ENCODE measurements at regions of chr4 and their contacts with region 1.

Region 1: DNA sequence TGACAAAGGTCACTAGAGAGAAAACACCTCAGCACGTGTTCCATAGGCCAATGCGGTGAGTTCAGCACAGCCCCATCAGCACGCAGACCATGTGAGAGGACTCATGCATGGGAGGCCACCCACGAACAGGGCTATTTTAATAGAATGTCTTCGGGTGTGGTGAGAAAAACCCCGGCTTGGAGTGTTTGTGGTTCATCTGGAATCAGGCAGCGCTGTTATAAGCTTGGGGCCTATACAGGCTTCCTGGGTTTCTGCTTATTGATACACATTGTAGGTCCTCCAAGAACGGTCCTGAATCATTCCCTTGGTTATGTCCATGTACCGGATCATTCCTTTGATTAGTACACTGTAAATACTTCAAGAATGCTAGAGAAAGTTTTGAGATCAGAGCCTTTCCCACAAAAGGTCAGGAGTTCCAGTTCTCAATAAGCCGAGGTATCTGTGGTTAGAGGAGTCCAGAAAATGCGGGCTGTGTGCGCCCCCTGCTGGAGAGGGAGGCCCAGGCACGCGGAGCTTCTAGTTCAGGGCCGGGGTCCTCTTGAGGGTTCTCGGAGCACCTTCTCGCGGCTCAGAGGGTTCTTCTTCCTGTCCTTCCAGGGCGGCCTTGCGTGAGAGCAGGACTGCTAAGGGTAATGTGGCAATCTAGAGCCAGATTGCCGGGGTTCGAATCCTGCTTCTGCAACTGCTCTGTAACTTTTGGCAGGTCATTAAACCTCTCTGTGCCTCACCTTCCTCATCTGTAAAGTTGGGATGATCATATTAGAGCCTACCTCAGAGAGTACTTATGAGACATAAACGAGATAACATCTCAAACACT is 51.8 kb downstream of the TLR10 start:
- DNase-seq: peak; percentile 62 to 96
- H3K4me3 ChIP-seq: no peak overlapping the region
- H3K27ac ChIP-seq: no peak overlapping the region
- H3K4me1 ChIP-seq: peaks cover 0 to 3% (median 1%) of the 10 kb centered on the region in 4 experiments; a peak in 2 of 7 replicates
- H3K27me3 ChIP-seq: no peaks in the 10 kb centered on the region
- CTCF ChIP-seq: peak; percentile 88 to 94 (median 91)
- EP300 ChIP-seq: no peak
- POLR2A ChIP-seq: no peak
- RAD21 ChIP-seq: peak; percentile 95 to 97

Region 2: DNA sequence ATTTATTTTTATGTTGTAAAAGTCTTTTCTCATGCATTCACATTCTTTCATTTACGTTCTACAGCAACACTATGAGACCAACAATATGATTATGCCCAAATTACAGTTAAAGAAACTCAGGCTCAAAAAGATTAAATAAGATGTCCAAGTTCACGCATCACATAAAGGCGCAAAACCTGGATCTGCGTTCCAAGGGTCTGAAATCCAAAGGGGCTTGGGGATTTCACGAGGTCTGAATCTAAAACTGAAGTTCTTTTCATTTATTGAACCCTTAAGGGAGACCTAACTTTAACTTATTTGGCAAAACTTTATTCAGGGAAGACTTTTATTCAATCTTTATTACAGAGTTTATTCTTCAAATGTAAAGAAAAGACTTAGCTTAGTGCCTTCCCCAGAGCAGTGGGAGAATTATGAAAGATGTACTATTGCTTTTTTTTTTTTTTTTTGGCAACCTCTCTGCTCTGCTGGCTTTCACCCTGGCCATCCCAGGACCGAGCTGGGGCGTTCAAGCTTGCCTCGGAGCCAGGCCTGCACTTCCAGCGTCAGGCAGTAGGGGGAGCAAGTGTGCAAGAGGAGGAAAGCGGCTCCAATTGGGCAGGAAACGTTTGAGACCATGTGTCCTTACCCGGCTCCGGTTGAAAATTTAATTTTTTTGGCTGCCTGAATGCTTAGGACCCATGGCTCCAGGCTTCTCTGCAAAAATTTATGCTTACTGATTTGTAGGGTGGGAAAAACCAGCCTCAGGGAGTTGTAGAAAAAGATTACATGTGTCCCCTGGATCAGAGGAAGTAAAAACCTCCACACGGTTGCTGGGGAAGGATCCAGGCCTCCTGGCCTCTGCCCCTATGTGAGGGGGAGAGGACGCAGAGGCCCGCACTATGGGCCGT is 411.3 kb before region 1 on chr4:
- CTCF ChIA-PET with region 1: interaction called, 11 read pairs
- POLR2A ChIA-PET with region 1: no interaction called
- DNase-seq: peak; percentile 76 to 100
- H3K4me3 ChIP-seq: no peak overlapping the region; a peak in 1 of 8 replicates
- H3K27ac ChIP-seq: no peak overlapping the region
- H3K4me1 ChIP-seq: peaks cover 0 to 3% (median under 1%) of the 10 kb centered on the region in 4 experiments; a peak in 1 of 7 replicates
- H3K27me3 ChIP-seq: no peaks in the 10 kb centered on the region
- CTCF ChIP-seq: peak; percentile 86 to 94 (median 94)
- EP300 ChIP-seq: no peak
- POLR2A ChIP-seq: no peak
- RAD21 ChIP-seq: peak; percentile 91 to 92

Region 3: DNA sequence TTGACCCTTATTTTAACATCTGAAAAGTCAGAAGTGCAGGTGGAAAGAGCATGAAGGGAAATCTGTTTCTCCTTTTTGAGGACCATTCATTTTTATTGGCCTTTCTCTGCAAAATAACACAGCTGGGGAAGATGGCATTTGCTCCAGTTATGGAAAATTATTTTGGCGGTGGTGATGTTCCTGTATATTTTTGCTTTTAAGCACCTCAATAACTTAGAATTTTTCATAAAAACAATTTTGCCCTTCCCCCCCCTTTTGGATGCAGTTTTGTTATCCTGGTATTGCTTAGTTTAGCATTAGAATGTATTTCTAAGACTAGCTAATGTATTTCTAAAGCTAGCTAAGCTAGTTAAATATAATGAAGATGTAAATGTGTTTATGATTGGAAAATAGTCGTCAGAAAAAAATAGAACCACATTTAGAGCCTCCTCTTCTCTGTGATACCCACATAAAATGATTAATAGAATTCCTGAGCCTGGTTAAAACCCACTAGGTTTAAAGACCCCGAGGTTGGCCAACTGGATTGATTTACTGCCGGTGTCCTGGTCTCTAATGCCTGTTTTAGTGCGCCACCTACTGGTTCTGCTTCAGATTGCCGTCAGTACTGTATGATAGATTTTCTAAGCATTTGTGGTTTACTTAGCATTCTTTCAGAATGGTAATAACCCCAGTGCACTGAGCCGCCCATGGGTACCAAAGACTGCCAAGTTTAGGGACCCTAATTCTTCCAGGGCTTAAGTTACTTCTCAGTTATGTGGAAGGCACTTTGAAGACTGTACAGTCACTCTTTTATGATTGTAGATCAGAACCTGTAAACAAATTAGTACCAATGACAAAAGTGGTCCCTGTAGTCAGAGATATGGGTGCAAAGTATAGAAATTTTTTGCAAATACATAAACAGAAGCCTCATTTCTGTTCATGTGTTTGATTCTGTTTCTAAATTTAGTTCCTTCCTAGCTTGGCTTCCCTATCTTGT is 55.6 kb before region 1 on chr4:
- CTCF ChIA-PET with region 1: interaction called, 11 read pairs
- POLR2A ChIA-PET with region 1: no interaction called
- DNase-seq: peak in 1 of 2 experiments; percentile 87
- H3K4me3 ChIP-seq: no peak overlapping the region
- H3K27ac ChIP-seq: no peak overlapping the region
- H3K4me1 ChIP-seq: peaks cover 22 to 41% (median 26%) of the 10 kb centered on the region in 4 experiments
- H3K27me3 ChIP-seq: no peaks in the 10 kb centered on the region
- CTCF ChIP-seq: peak; percentile 47 to 87 (median 86)
- EP300 ChIP-seq: no peak
- POLR2A ChIP-seq: no peak
- RAD21 ChIP-seq: peak; percentile 98 to 100

Region 4: DNA sequence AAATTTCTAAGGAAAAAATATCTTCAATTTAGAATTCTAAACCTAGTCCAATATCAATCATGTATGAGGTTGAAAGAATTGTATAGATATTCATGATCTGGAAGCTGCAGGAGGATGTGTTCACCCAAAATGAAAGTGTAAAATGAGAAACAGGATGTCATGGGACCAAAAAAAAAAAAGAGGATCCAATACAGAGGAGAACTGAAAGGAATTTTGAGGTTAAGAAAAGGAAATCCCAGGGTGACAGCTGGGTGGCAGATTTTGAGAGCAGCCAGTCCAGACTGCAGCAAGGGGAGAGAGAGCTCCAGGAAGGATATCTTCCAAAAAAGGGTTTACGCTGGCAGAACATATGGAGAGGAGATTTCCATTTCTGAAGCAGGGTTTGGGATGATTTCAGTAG is 12.8 kb after region 1 on chr4:
- CTCF ChIA-PET with region 1: interaction called, 22 read pairs
- POLR2A ChIA-PET with region 1: no interaction called
- DNase-seq: no peak
- H3K4me3 ChIP-seq: no peak overlapping the region
- H3K27ac ChIP-seq: no peak overlapping the region
- H3K4me1 ChIP-seq: no peaks in the 10 kb centered on the region
- H3K27me3 ChIP-seq: no peaks in the 10 kb centered on the region
- CTCF ChIP-seq: no peak
- EP300 ChIP-seq: no peak
- POLR2A ChIP-seq: no peak
- RAD21 ChIP-seq: no peak